Activated CD4-positive, alpha-beta T cell treated with anti-CD3 and anti-CD28 coated beads, Interleukin-2, amount 10 ng/mL, durations not matched to agents 24 days and 14 days (primary cell): ENCODE measurements at regions of chr11 and their contacts with region 1.

Region 1: GRCh38 chr11:67468835-67469811 is at the start of gene TMEM134:
- DNase-seq: peak; percentile 96
- H3K4me3 Mint-ChIP-seq: peak within 1 kb of the TSS; percentile 96
- H3K27ac Mint-ChIP-seq: peak within 1 kb of the TSS; percentile 84
- H3K4me1 Mint-ChIP-seq: peaks cover 25% of the 10 kb centered on the region
- H3K27me3 Mint-ChIP-seq: no peaks in the 10 kb centered on the region
- total RNA-seq, gene TMEM134: 56.8 and 58.3 TPM in 2 replicates

Region 2: DNA sequence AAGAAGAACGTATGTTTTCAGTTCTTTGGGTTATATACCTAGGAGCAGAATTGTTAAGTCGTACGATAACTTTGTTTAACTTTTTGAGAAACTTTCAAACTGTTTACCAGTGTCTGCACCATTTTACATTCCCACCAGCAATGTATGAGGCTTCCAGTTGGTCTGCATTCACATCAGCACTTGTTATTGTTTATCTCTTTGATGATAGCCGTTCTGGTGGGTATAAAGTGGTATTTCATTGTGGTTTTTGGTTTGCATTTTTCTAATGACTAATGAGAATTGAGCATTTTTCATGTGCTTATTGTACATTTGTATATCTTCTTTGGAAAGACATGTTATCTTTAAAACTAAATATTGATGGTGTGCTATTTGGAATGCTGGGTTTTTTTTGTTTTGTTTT is 290.2 kb before region 1 on chr11:
- intact Hi-C with region 1: no loop called
- DNase-seq: no peak
- H3K4me3 Mint-ChIP-seq: no peak overlapping the region
- H3K27ac Mint-ChIP-seq: no peak overlapping the region
- H3K4me1 Mint-ChIP-seq: peaks cover 11% of the 10 kb centered on the region
- H3K27me3 Mint-ChIP-seq: no peaks in the 10 kb centered on the region

Region 3: DNA sequence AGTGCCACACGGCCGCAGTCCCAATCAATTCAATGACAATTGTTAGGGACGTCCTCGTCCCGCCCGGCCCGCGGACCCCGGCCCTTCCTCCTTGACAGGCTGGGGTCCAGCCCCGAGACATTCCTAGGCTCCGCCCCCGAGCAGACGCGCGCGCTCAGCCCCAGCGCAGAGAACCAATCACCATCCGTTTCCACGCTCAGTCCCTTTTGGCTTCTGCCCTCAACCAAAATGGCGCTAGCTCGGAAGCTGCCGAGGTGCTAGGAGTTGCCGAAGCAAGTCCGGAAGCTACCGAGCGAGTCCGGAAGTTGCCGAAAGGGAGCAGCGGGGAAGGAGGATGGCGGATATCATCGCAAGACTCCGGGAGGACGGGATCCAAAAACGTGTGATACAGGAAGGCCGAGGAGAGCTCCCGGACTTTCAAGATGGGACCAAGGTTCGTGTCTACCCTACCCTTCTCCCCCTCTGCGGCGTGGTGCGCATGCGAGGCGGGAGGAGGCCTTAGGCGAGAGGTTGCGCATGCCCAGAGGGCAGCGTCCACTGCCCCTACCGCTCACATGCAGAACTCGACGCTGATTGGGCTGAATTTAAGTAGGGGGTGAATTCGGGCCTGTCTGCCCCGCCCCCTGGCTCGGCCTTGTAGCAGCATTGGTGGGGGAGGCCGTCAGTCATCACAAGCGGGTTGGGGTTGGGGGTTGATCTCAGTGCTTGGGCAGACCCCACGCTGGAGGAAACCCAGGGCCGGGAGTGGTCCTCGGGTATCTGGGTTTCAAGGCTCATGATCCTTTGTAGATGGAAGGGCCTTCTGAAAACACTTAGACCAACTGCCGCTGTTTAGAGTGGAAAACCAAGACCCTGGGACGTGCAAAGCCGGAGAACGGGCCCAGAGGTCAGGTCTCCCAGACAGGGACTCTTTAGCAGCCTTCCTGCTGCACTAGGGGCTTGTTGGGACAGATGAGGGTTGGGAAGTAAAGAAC is 14.0 kb after region 1 on chr11 and contains the start of gene AIP:
- intact Hi-C with region 1: loop called (anchors 1 kb)
- DNase-seq: peak; percentile 99
- H3K4me3 Mint-ChIP-seq: peak within 1 kb of the TSS; percentile 96
- H3K27ac Mint-ChIP-seq: peak within 1 kb of the TSS; percentile 99
- H3K4me1 Mint-ChIP-seq: peaks cover 47% of the 10 kb centered on the region
- H3K27me3 Mint-ChIP-seq: peaks cover 5% of the 10 kb centered on the region
- total RNA-seq, gene AIP: 186 and 189 TPM in 2 replicates